ENCODE measurements at regions of chr5 and their contacts with region 1.

Region 1: DNA sequence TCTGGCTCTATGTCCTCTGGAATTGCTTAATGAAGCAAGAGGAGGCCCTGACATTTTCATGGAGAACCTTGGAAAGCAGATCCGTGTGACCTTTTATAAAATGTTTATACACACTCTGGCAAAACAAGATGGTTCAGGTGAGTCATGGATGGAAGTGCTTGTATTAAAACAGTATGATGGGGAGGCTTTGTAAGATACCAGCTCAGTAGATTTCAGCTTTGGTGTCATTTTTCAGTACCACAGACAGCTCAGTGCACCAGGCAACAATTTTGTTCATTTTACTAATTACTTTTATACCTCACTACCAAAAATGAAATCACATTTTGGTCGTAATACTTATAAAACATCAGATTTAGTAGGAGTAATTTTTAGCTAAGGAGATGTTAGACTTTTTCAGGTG is 5.2 kb downstream of the KCNN2 start:
- DNase-seq: no peak
- ATAC-seq: no peak
- H3K4me3 ChIP-seq: no peak overlapping the region
- H3K27ac ChIP-seq: no peak overlapping the region
- H3K4me1 ChIP-seq: no peaks in the 10 kb centered on the region
- H3K27me3 ChIP-seq: peaks cover 2% of the 10 kb centered on the region; the same call in 1 of the 2 replicates
- CTCF ChIP-seq: no peak

Region 2: DNA sequence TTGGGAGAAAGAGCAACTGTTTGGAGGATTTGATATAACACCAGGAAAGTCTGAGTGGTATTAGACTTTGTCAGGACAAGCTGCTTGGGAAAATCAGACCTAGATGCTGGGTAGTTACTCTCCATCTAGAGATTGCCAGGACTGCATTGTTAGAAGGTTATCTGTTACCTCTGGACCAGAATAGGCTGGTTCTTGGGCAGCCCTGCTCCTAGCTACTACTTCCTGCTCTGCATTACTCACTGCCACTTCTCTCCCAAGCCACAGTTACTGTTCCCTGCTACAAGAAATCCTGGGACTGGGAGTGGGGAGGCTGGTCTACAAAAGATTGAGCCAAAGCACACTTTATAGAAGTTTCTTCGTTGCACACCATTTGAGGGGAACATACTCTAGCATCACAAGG is 100.7 kb before region 1 on chr5:
- CTCF ChIA-PET with region 1: no interaction called
- POLR2A ChIA-PET with region 1: no interaction called
- in situ Hi-C with region 1: no loop called
- intact Hi-C with region 1: no loop called
- DNase-seq: no peak
- ATAC-seq: no peak
- H3K4me3 ChIP-seq: no peak overlapping the region
- H3K27ac ChIP-seq: no peak overlapping the region
- H3K4me1 ChIP-seq: no peaks in the 10 kb centered on the region
- H3K27me3 ChIP-seq: no peaks in the 10 kb centered on the region
- CTCF ChIP-seq: no peak

Region 3: DNA sequence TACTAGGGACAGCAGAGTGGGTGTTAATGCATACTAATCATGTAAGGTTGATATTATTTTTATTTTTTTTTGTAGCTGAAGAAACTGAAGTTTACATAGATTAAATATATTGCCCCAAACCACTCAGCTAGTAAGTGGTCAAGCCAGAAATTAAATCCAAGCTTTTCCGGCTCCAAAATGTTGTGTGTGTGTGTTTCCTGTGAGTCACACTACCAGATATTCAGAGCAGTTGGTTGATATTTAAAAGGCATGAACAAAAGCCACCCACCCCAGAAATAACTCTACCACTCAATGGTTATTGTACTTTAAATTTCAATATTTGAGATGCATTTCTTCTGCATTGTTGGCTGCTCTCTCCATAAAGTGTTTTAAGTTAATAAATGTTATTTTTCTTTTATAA is 24.3 kb after region 1 on chr5:
- CTCF ChIA-PET with region 1: no interaction called
- POLR2A ChIA-PET with region 1: no interaction called
- in situ Hi-C with region 1: no loop called
- intact Hi-C with region 1: loop called (anchors 2 kb)
- DNase-seq: no peak
- ATAC-seq: no peak
- H3K4me3 ChIP-seq: no peak overlapping the region
- H3K27ac ChIP-seq: no peak overlapping the region
- H3K4me1 ChIP-seq: no peaks in the 10 kb centered on the region
- H3K27me3 ChIP-seq: no peaks in the 10 kb centered on the region
- CTCF ChIP-seq: no peak

Measured in Panc1 (cell line).